Posterior cingulate gyrus (tissue), 11 donors: ENCODE measurements at regions of chr2 and their contacts with region 1.

Region 1: DNA sequence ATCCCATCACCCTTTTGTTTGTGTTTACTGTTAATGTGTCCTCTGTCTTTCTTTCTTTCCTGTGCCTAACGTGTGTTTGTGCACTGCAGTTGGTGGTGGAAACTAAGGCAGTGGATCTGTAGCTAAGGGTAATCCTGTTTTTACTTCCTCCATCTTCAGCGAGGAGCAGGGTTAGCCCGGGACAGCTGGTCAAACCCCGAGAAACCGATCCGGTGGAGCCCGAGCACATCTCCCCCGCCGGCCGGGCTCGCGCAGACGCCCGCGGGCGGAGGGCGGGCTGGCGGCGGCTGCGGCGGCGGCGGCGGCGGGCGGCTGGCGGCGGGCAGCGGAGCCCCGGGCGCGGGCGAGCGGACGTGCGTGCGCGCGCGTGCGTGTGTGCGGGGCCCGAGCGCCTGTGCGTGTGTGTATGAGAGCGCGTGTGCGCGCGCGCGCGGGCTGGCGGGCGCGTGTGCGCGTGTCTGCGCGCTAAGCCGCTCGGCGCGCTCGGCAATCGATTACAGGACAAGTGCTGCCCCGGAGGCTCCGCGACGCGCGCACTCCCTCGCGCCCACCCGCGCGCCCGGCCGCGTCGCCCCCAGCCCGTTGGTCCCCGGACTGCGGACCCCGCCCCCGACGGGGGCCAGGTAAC is at the start of gene IKZF2:
- DNase-seq: peak; percentile 64 to 97 (median 79)

Region 2: DNA sequence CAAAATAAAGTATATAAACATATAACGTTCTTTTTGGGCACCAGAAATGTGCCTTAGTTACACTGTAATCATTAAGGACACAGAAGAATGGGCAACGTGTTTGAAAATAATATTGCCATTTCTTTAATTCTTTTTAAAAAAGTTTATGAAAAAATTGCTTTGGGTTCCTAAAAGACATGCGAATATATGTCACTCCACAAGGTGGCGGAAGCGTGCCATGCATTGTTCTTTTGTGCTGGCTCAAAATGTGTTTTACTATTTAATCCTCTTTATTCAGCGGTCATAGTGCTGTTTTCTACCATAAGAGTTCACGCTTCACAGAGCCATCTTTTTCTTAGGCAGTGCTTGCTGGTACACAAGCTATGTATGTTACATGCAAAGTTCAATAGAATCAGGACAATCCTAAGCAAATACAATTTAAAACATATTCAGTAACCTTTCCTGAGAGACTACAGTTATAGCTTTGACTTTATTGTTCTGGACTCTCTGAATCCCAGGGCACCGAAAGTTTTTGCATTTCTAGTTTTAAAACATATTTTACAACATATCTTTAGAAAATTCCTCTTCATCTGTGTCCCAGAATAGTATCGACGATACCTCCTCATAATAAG is 465.2 kb before region 1 on chr2:
- intact Hi-C with region 1: loop called (anchors 1 kb)
- DNase-seq: peak in 8 of 10 donors; percentile 29 to 91 (median 54)

Region 3: GRCh38 chr2:212777020-212777491 is 374.5 kb before region 1 on chr2:
- intact Hi-C with region 1: loop called (anchors 2 kb)
- DNase-seq: no peak

Region 4: GRCh38 chr2:213046431-213046830 is 105.1 kb before region 1 on chr2:
- intact Hi-C with region 1: no loop called
- DNase-seq: no peak